AG04450 (cell line): ENCODE measurements at regions of chr14 and their contacts with region 1.

Region 1: GRCh38 chr14:93115069-93115820 is 480 bp downstream of the ITPK1 start:
- DNase-seq: no peak
- H3K4me3 ChIP-seq: peak overlapping the region; percentile 74
- H3K27ac ChIP-seq: no peak overlapping the region
- H3K27me3 ChIP-seq: no peaks in the 10 kb centered on the region
- CTCF ChIP-seq: no peak

Region 2: DNA sequence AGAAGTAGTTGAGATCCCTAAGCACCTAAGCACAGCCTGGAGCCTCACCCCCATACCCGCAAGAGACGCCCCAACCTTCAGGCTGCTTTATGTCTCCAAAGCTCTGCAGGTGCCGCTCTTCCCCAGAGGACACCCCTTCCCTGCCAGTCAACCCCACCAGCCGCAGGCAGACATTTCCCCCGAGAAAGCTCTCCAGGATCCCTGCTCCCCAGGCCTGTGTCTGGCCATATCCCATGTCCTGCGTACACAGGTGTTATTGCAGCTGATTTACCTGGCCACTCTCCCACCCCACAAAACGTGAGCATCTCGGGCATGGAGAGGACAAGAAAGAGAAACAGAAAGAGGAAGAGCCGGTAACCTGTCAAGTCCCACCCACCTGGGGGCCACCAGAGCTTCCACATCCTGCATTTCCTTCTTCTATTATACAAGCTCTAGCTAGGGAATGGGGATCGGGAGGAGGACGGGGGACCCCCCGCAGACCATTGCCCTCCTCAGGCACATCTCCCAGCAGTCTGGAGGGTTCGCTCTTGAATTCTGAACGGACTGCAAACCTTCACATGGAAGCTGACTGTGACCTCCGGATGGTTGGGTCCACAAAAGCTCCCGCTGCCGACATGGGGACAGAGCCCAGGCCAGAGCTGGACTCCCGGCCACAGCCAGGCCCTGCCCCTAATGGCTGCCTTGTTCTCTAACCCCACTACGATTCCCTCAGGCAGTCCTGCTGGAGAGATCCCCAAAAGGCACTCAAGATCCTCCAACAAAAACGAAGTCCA is 1715.2 kb before region 1 on chr14:
- CTCF ChIA-PET with region 1: no interaction called
- POLR2A ChIA-PET with region 1: no interaction called
- DNase-seq: no peak
- H3K4me3 ChIP-seq: no peak overlapping the region
- H3K27ac ChIP-seq: no peak overlapping the region
- H3K27me3 ChIP-seq: peaks cover 26% of the 10 kb centered on the region
- CTCF ChIP-seq: no peak

Region 3: GRCh38 chr14:92993302-92993701 is 121.9 kb before region 1 on chr14:
- CTCF ChIA-PET with region 1: no interaction called
- POLR2A ChIA-PET with region 1: no interaction called
- DNase-seq: no peak
- H3K4me3 ChIP-seq: no peak overlapping the region
- H3K27ac ChIP-seq: no peak overlapping the region
- H3K27me3 ChIP-seq: no peaks in the 10 kb centered on the region
- CTCF ChIP-seq: no peak

Region 4: DNA sequence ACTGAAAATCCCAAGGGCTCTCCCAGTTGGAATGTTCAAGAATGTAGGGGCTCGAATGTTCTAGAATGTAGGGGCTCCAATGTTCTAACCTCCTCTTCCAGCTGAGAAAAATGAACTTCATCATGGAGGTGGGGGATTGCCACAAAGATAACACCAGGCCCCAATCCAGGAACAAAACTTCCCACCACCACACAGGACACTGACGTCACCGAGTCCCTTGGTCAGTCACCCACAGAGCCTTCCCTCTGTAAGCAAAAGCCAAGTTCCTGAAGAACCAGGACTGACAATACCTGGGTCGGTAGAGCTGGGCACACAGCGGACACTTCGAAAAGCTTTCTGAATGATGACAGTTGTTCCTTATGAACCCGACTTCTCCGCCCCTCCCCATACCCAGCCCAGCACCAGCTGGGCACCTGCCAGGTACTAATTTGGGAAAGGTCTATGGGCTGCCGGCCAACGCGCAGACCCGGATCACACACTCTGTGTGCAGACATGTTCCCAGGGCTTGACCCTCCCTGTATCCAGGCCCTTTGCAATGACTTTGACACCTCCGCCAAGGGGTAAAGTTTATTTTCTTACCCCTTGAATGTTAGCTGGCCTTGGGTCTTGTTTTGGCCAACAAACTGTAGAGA is 18.4 kb before region 1 on chr14:
- CTCF ChIA-PET with region 1: interaction called, 68 read pairs
- POLR2A ChIA-PET with region 1: no interaction called
- DNase-seq: no peak
- H3K4me3 ChIP-seq: no peak overlapping the region
- H3K27ac ChIP-seq: no peak overlapping the region
- H3K27me3 ChIP-seq: no peaks in the 10 kb centered on the region
- CTCF ChIP-seq: no peak

Region 5: DNA sequence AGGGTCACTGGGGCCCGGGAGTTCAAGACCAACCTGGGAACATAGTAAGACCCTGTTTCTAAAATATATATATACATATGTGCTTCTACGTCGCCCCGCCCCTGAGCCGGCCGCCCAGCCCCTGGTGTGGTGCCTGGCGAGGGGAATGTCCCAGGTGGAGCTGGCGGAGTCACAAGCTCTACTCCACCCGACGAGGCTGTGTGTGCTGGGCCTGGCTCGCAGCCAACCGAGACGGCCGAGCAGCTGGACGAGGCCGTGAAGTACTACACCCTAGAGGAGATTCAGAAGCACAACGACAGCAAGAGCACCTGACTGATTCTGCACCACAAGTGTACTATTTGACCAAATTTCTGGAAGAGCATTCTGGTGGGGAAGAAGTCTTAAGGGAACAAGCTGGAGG is 22.6 kb after region 1 on chr14:
- CTCF ChIA-PET with region 1: interaction called, 84 read pairs
- POLR2A ChIA-PET with region 1: no interaction called
- DNase-seq: no peak
- H3K4me3 ChIP-seq: no peak overlapping the region
- H3K27ac ChIP-seq: no peak overlapping the region
- H3K27me3 ChIP-seq: peaks cover 7% of the 10 kb centered on the region
- CTCF ChIP-seq: no peak

Region 6: DNA sequence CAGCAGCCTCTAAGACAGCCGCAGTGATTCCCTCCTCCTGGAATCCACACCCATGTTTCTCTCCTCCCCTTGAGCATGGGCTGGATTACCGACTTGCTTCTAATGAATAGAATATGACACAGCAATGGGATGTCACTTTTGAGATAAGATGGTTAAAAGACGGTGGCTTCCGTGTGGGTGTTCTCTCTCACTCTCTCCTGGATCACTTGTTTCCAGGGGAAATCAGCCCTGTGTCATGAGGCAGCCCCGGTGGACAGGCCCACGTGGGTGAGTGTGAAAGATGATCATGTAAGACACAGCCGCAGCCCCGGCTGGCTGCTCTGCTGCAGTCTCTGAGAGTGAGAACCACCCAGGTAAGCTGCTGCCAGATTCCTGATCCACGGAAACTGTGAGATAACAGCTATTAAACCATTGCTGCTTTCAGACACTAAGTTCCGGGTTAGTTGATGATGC is 58.7 kb after region 1 on chr14:
- CTCF ChIA-PET with region 1: interaction called, 72 read pairs
- POLR2A ChIA-PET with region 1: no interaction called
- DNase-seq: no peak
- H3K4me3 ChIP-seq: no peak overlapping the region
- H3K27ac ChIP-seq: no peak overlapping the region
- H3K27me3 ChIP-seq: no peaks in the 10 kb centered on the region
- CTCF ChIP-seq: no peak

Region 7: DNA sequence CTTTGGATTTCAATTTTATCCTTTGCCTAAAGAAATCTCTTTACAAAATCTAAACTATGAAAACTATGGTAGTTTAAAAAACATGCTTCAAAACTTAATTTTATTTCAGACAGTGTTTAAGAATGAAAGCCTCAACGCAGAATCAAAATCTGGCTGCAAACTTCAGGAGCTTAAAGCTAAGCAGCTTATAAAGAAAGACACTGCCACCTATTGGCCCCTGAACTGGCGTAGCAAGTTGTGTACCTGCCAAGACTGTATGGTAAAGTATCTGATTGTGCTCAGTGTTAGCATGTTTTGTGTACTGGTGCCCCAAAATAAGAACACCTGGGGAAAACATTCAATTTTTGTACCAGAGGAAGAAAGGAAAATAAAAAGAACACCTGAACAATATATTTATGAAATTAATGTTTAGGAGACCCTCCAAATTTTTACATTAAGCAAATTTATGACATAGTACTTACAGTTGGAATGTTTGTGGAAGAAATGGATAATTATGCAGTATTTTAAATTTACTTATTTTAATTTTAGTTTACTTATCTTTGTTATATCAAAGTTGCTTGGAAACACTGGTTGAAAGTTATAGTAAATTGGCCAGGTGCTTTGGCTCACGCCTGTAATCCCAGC is 104.0 kb after region 1 on chr14:
- CTCF ChIA-PET with region 1: interaction called, 23 read pairs
- POLR2A ChIA-PET with region 1: no interaction called
- DNase-seq: no peak
- H3K4me3 ChIP-seq: no peak overlapping the region
- H3K27ac ChIP-seq: no peak overlapping the region
- H3K27me3 ChIP-seq: no peaks in the 10 kb centered on the region
- CTCF ChIP-seq: peak; percentile 68